OCI-LY7 (cell line): ENCODE measurements at regions of chr2 and their contacts with region 1.

Region 1: DNA sequence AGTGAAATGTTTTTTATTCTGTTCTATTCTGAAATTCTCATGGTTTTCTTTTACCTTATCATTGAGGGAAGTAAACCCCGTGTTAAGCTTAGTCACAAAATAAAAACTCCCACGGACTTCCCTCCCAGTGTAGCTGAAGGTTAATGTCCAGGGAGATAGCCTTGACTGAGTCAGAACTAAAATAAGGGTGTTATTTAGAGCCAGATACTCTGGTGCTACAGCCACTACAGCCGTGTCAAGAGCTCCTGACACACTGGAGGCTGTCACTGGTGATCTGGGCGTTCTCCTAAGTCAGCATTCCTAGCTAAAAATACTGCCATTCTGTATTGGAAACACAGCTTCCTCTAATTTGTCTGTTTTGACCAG is 82.0 kb upstream of the RANBP2 start:
- DNase-seq: no peak
- H3K4me3 ChIP-seq: no peak overlapping the region
- H3K27ac ChIP-seq: no peak overlapping the region
- H3K4me1 ChIP-seq: peaks cover 45% of the 10 kb centered on the region
- CTCF ChIP-seq: no peak

Region 2: GRCh38 chr2:108345951-108346350 is 291.3 kb before region 1 on chr2:
- CTCF ChIA-PET with region 1: no interaction called
- POLR2A ChIA-PET with region 1: no interaction called
- intact Hi-C with region 1: no loop called
- DNase-seq: no peak
- H3K4me3 ChIP-seq: no peak overlapping the region
- H3K27ac ChIP-seq: no peak overlapping the region
- H3K4me1 ChIP-seq: no peaks in the 10 kb centered on the region
- CTCF ChIP-seq: no peak

Region 3: DNA sequence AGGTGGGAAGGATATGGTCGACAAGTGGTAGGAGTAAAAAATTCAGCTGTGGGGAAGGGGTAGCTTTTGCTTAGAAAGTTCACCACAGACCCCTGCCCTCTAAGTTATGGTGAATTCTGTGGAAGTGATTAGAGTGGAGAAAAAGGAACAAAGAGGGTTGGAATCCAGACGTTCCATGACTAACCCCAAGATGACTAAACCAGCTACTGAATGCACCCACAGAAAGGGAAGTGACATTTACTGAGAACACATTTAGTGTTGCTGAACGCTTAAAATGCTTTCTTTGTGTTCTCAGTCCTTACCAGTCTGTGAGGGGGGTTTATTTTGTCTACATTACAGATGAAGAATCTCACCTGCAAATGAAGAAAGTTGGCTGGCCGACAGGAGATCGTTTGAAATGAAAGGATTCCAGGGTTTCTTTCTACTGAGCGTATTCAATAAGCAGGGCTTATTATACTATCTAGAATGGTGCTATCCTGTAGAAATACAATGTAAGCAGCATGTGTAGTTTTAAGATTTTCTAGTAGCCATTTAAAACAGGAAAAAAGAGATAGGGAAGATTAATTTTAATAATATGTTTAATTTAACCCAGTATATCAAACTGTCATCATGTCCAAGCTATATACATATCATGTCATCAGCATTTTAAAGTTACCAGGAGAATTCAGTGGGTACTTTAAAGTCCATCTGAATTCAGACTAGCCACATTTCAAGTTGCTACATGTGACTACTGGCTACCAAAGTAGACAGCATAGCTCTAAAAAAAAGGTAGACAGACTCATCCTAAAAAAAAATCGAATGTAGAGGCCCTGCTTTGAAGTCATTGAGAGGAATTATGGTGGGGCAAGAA is 42.9 kb before region 1 on chr2:
- CTCF ChIA-PET with region 1: no interaction called
- POLR2A ChIA-PET with region 1: interaction called, 11 read pairs
- intact Hi-C with region 1: no loop called
- DNase-seq: no peak
- H3K4me3 ChIP-seq: no peak overlapping the region
- H3K27ac ChIP-seq: no peak overlapping the region
- H3K4me1 ChIP-seq: peaks cover 22% of the 10 kb centered on the region
- CTCF ChIP-seq: no peak

Region 4: DNA sequence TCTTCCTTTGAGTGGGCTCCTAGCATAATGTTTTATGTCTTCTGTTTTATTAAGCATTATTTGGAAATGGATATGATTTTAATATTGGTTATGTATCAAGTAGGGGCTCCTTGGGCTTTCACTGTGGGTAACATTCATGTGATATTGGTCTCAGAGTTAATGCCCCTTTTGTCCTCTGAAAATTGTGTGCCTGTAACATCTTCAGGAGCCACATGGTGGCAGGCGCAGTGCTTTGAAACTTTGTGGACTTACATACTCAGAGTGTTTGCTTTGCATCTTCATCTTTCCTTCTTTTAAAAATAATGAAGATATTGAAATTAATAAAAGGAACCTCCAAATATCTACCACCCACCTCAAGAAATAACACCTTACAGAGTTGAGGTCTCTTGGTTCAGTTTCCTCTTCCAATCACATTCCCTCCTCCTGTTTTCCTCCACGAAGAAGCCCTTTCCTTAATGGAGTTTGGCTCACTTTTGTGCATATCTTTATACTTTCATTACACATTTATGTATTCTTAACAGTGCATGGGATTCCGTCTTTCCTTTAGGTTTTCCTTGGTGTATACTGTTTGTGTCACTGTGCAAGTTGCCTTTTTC is 29.5 kb before region 1 on chr2:
- CTCF ChIA-PET with region 1: interaction called, 48 read pairs
- POLR2A ChIA-PET with region 1: interaction called, 356 read pairs
- intact Hi-C with region 1: loop called (anchors 1 kb)
- DNase-seq: peak; percentile 81
- H3K4me3 ChIP-seq: no peak overlapping the region
- H3K27ac ChIP-seq: no peak overlapping the region
- H3K4me1 ChIP-seq: peaks cover 50% of the 10 kb centered on the region
- CTCF ChIP-seq: peak; percentile 97

Region 5: DNA sequence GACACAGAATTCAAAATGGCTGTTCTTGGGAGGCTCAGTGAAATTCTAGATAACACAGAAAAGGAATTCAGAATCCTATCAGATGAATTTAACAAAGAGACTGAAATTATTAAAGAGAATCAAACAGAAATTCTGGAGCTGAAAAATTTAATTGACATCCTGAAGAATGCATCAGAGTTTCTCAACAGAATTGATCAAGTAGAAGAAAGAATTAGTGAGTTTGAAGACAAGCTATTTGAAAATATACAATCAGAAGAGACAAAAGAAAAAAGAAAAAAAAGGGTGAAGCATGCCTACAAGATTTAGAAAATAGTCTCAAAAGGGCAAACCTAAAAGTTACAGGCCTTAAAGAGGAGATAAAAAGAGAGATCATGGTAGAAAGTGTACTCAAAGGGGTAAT is 70.0 kb after region 1 on chr2:
- CTCF ChIA-PET with region 1: no interaction called
- POLR2A ChIA-PET with region 1: no interaction called
- intact Hi-C with region 1: no loop called
- DNase-seq: no peak
- H3K4me3 ChIP-seq: no peak overlapping the region
- H3K27ac ChIP-seq: no peak overlapping the region
- H3K4me1 ChIP-seq: no peaks in the 10 kb centered on the region
- CTCF ChIP-seq: no peak

Region 6: DNA sequence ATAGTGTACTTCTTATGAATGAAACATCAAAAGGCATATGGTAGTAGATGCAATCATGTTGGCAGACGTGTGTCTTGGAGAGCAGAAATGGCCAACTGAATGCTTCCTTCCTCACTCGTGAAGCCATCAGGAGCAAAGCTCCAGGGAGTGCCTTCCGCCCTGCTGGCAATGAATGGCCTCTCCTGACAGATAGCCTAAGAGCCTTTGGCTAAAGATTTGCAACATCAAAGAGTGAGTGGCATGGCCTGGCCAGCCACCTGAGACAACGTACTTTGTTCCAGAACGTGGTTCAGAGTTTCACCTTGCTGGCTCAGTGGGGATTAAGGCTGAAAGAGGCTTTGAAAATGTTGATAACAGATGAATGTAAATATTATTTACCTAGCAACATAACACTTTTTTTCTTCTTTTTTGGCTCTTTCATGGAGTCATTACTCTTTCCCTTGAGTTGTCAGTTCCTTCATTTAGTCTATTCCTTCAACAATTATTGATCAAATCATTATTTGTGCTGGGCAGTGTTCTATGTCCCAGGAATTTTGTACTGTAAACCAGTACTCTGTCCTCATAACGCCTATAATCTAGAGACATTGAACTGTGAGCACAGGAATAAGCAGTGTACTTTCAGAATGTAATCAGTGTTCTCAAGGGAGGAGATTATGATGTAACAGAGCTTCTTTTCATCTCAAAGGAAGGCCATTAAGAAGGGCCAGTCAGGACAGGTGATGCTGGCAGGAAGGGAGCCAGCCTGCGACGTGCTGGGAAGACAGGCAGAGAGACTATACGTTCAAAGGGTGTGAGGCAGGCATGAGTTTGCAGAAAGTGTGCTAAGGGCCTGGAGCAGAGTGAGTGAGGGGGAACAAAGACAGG is 432.3 kb after region 1 on chr2:
- CTCF ChIA-PET with region 1: no interaction called
- POLR2A ChIA-PET with region 1: no interaction called
- intact Hi-C with region 1: no loop called
- DNase-seq: no peak
- H3K4me3 ChIP-seq: no peak overlapping the region
- H3K27ac ChIP-seq: no peak overlapping the region
- H3K4me1 ChIP-seq: no peaks in the 10 kb centered on the region
- CTCF ChIP-seq: no peak